ENCODE measurements at regions of chr10 and their contacts with region 1.

Region 1: GRCh38 chr10:28676968-28677887 is at the start of gene BAMBI:
- DNase-seq: peak; percentile 93 to 97 (median 95)
- H3K4me3 ChIP-seq: peak within 1 kb of the TSS; percentile 88
- H3K27ac ChIP-seq: peak within 1 kb of the TSS; percentile 59 to 85
- H3K4me1 ChIP-seq: peaks cover 2% of the 10 kb centered on the region
- H3K27me3 ChIP-seq: no peaks in the 10 kb centered on the region
- CTCF ChIP-seq: peak; percentile 42 to 93 (median 90)
- EP300 ChIP-seq: no peak
- POLR2A ChIP-seq: peak; percentile 92
- total RNA-seq, gene BAMBI: 28.6 to 138 (median 46.0) TPM

Region 2: GRCh38 chr10:28587970-28588290 is 89.3 kb before region 1 on chr10:
- intact Hi-C with region 1: no loop called
- DNase-seq: no peak
- H3K4me3 ChIP-seq: no peak overlapping the region
- H3K27ac ChIP-seq: no peak overlapping the region
- H3K4me1 ChIP-seq: peaks cover 10% of the 10 kb centered on the region
- H3K27me3 ChIP-seq: no peaks in the 10 kb centered on the region
- CTCF ChIP-seq: no peak
- EP300 ChIP-seq: no peak
- POLR2A ChIP-seq: no peak

Region 3: DNA sequence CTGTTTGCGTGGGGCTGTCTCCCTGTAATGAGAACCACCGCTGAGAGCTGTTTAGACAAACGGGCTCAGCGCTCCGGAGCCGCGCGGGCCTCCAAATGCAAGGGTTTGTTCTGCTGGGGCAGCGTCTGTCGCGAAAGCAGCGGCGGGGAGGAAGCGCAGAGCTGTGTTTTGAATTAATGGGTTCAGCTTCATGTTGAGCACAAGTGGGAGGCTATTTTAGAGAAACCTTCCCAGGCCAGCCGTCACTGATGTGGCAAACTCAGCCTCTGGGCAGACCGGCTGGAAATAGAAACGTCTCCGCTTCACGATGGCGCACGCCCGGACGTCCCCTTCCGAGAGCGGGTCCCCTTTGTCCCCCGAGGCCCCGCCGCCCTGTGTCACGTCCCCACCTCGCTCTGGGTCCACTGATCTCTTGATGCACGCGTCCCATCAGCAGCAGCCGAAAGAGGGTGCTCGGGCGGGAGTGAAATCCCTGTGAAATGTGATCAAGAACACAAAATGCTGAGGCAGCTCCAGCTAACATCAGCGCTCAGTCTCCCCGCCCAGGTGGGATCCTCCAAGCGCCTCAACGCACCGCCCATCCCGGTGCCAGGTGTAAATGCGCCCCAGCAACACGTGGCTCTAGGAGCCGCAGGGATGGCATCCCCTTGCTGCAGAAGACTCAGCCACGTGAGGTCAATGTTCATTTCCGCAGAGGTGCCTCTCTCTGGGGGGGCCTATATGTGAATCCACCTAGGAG is 45.0 kb after region 1 on chr10:
- intact Hi-C with region 1: loop called in 1 of 4 experiments (anchors 5 kb)
- DNase-seq: peak; percentile 59 to 74 (median 67)
- H3K4me3 ChIP-seq: peak overlapping the region; percentile 43
- H3K27ac ChIP-seq: peak overlapping the region; percentile 71 to 85
- H3K4me1 ChIP-seq: peaks cover 5% of the 10 kb centered on the region
- H3K27me3 ChIP-seq: no peaks in the 10 kb centered on the region
- CTCF ChIP-seq: no peak
- EP300 ChIP-seq: no peak
- POLR2A ChIP-seq: no peak

Region 4: GRCh38 chr10:28807760-28808613 is 130.8 kb after region 1 on chr10:
- intact Hi-C with region 1: loop called in 2 of 4 experiments (anchors 10 kb)
- DNase-seq: peak in 2 of 5 donors; percentile 47 to 60
- H3K4me3 ChIP-seq: no peak overlapping the region
- H3K27ac ChIP-seq: peak overlapping the region; percentile 82 to 88
- H3K4me1 ChIP-seq: peaks cover 18% of the 10 kb centered on the region
- H3K27me3 ChIP-seq: no peaks in the 10 kb centered on the region
- CTCF ChIP-seq: no peak
- EP300 ChIP-seq: no peak
- POLR2A ChIP-seq: no peak

Region 5: GRCh38 chr10:28991326-28992270 is 314.4 kb after region 1 on chr10:
- intact Hi-C with region 1: loop called in 1 of 4 experiments (anchors 10 kb)
- DNase-seq: no peak
- H3K4me3 ChIP-seq: no peak overlapping the region
- H3K27ac ChIP-seq: no peak overlapping the region
- H3K4me1 ChIP-seq: no peaks in the 10 kb centered on the region
- H3K27me3 ChIP-seq: no peaks in the 10 kb centered on the region
- CTCF ChIP-seq: peak in 2 of 3 donors; percentile 21 to 22
- EP300 ChIP-seq: no peak
- POLR2A ChIP-seq: no peak

Region 6: DNA sequence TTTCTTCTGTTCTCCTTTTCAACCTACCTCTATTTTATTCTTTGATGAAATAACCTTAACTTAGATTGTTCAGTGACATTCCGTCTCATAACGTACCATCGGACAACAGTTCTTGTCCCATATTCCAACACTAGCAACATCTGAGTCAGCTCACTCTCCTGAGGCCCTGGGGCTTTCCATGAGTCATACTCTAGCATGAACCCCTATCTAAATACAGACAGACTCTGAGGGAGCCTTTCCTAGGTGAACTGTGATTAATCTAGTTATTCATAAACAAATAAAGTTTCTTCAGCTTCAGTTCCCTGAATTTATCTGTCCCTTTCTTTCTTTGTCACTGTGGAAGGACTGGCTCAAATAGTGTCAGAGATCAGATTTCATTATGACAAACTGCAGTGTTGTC is 443.0 kb after region 1 on chr10:
- intact Hi-C with region 1: loop called in 1 of 4 experiments (anchors 10 kb)
- DNase-seq: no peak
- H3K4me3 ChIP-seq: no peak overlapping the region
- H3K27ac ChIP-seq: no peak overlapping the region
- H3K4me1 ChIP-seq: no peaks in the 10 kb centered on the region
- H3K27me3 ChIP-seq: no peaks in the 10 kb centered on the region
- CTCF ChIP-seq: no peak
- EP300 ChIP-seq: no peak
- POLR2A ChIP-seq: no peak

Region 7: DNA sequence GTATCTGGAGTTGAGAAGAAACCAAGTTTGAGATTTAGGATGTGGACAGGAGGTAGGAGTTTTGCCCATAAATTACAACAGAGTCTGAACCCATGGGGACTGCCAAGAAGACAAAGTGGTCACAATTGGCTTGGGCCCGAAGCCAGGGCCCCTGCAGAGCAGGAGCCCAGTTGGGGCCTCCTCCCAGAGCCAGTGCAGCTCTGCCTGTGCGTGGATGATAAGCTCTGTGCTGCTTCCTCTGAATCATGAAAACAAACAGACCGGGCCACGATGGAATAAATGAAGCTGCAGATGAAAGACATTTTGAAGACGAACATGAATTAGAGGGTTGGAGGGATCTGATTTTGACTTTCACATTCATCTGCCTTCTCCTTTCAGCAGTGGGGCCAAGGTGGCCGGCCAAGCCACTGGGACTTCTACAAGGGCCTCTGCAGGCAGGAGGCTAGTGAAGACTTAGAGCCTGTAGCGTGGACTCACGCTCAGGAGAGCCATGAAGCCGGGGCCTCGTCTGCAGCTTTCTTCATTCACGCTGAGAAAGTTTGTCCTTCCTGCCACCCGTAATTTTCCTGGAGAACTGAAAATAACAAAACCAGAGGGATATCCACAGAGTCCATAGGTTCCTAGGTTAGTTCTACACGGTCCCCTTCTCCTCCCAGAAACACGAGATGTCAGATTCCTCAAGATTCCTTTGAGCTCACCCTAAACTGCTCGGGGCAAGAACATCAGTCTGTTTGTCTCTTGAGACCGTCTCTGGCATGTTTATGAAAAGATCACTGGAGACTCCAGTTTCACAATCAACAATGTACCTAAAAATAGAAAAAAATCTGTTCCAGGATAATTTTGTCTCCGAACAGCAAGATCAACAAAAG is 455.0 kb after region 1 on chr10:
- intact Hi-C with region 1: loop called in 2 of 4 experiments (anchors 5 to 10 kb)
- DNase-seq: peak in 1 of 5 donors; percentile 27
- H3K4me3 ChIP-seq: no peak overlapping the region
- H3K27ac ChIP-seq: no peak overlapping the region
- H3K4me1 ChIP-seq: peaks cover 3% of the 10 kb centered on the region
- H3K27me3 ChIP-seq: no peaks in the 10 kb centered on the region
- CTCF ChIP-seq: no peak
- EP300 ChIP-seq: no peak
- POLR2A ChIP-seq: no peak

Region 8: GRCh38 chr10:29304264-29305030 is 627.2 kb after region 1 on chr10:
- intact Hi-C with region 1: loop called in 2 of 4 experiments (anchors 5 kb)
- DNase-seq: peak; percentile 68 to 82 (median 71)
- H3K4me3 ChIP-seq: no peak overlapping the region
- H3K27ac ChIP-seq: peak overlapping the region in 1 of 2 donors; percentile 4
- H3K4me1 ChIP-seq: no peaks in the 10 kb centered on the region
- H3K27me3 ChIP-seq: no peaks in the 10 kb centered on the region
- CTCF ChIP-seq: peak; percentile 76 to 93 (median 85)
- EP300 ChIP-seq: no peak
- POLR2A ChIP-seq: no peak

Measured in ovary (tissue), 10 donors.